OCI-LY7 (cell line): ENCODE measurements at regions of chr4 and their contacts with region 1.

Region 1: GRCh38 chr4:2660596-2661211 is 95.4 kb downstream of the TNIP2 start:
- DNase-seq: no peak
- H3K4me3 ChIP-seq: no peak overlapping the region
- H3K27ac ChIP-seq: no peak overlapping the region
- H3K4me1 ChIP-seq: no peaks in the 10 kb centered on the region
- CTCF ChIP-seq: no peak

Region 2: GRCh38 chr4:2630556-2631273 is 30.0 kb before region 1 on chr4:
- CTCF ChIA-PET with region 1: no interaction called
- POLR2A ChIA-PET with region 1: no interaction called
- intact Hi-C with region 1: loop called (anchors 1 kb)
- DNase-seq: no peak
- H3K4me3 ChIP-seq: no peak overlapping the region
- H3K27ac ChIP-seq: no peak overlapping the region
- H3K4me1 ChIP-seq: no peaks in the 10 kb centered on the region
- CTCF ChIP-seq: peak; percentile 45

Region 3: GRCh38 chr4:2685541-2685940 is 24.8 kb after region 1 on chr4:
- CTCF ChIA-PET with region 1: no interaction called
- POLR2A ChIA-PET with region 1: no interaction called
- intact Hi-C with region 1: no loop called
- DNase-seq: no peak
- H3K4me3 ChIP-seq: no peak overlapping the region
- H3K27ac ChIP-seq: no peak overlapping the region
- H3K4me1 ChIP-seq: peaks cover 13% of the 10 kb centered on the region
- CTCF ChIP-seq: no peak